PC-9 (cell line): ENCODE measurements at regions of chr3 and their contacts with region 1.

Region 1: GRCh38 chr3:176905331-176905730 is 292.0 kb downstream of the TBL1XR1 start:
- DNase-seq: peak in 1 of 2 experiments; percentile 59
- H3K4me3 ChIP-seq: no peak overlapping the region
- H3K27ac ChIP-seq: no peak overlapping the region
- H3K4me1 ChIP-seq: peaks cover 30% of the 10 kb centered on the region
- H3K27me3 ChIP-seq: no peaks in the 10 kb centered on the region
- CTCF ChIP-seq: no peak

Region 2: DNA sequence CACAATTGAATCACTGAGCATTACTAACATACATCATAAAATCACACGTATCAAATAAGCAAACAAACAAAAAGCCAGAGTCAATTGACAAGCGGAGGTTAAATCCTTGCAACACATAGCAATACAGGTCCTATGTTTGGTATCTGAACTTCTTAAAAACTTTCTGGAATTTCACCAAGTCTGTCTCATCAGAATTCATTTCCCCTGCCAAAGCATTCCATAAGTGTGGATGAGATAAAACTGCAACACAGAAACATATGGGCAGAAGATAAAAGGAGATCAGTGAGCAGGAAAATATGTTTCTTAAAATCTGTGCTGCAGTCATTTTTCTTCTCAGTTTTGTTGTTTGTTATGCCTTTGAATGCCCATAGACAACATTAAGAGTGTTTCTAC is 863.5 kb before region 1 on chr3:
- CTCF ChIA-PET with region 1: no interaction called
- POLR2A ChIA-PET with region 1: interaction called, 10 read pairs
- intact Hi-C with region 1: no loop called
- DNase-seq: no peak
- H3K4me3 ChIP-seq: no peak overlapping the region
- H3K27ac ChIP-seq: no peak overlapping the region
- H3K4me1 ChIP-seq: no peaks in the 10 kb centered on the region
- H3K27me3 ChIP-seq: no peaks in the 10 kb centered on the region
- CTCF ChIP-seq: no peak